ENCODE measurements at regions of chr16 and their contacts with region 1.

Region 1: GRCh38 chr16:19086322-19087199 is 19.1 kb downstream of the COQ7 start:
- DNase-seq: peak; percentile 93
- ATAC-seq: peak; percentile 98

Region 2: GRCh38 chr16:19179546-19180490 is 93.3 kb after region 1 on chr16:
- intact Hi-C with region 1: loop called (anchors 10 kb)
- DNase-seq: peak; percentile 76
- ATAC-seq: peak; percentile 76

Region 3: GRCh38 chr16:19375561-19376158 is 289.1 kb after region 1 on chr16:
- intact Hi-C with region 1: loop called (anchors 5 kb)
- DNase-seq: no peak
- ATAC-seq: peak; percentile 64